H1 (cell line): ENCODE measurements at regions of chr6 and their contacts with region 1.

Region 1: GRCh38 chr6:147397306-147397705 is 111.2 kb upstream of the SAMD5 start:
- DNase-seq: no peak
- H3K4me3 ChIP-seq: no peak overlapping the region
- H3K27ac ChIP-seq: no peak overlapping the region
- H3K4me1 ChIP-seq: no peaks in the 10 kb centered on the region
- H3K27me3 ChIP-seq: no peaks in the 10 kb centered on the region
- CTCF ChIP-seq: no peak
- EP300 ChIP-seq: no peak
- POLR2A ChIP-seq: no peak
- RAD21 ChIP-seq: no peak

Region 2: DNA sequence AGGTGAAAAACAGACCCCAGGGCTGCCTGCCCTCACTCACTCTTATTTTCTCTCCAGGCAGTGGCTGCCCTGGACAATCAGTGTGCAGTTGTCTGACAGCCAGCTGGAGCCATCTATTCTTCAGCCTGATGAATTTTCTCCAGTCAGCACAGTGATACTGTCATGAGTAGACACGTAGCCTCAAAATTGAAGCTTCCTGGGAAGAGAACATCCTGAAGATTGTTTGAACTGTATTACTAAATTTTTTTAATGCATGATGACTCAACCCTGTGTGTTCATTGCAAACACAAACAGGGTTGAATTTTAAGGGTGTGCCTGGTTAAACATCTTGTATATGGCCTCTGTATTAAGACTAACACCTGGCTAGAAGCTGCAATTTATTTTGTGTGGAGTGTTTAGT is 242.9 kb before region 1 on chr6:
- CTCF ChIA-PET with region 1: no interaction called
- POLR2A ChIA-PET with region 1: no interaction called
- DNase-seq: no peak
- H3K4me3 ChIP-seq: no peak overlapping the region
- H3K27ac ChIP-seq: no peak overlapping the region
- H3K4me1 ChIP-seq: no peaks in the 10 kb centered on the region
- H3K27me3 ChIP-seq: no peaks in the 10 kb centered on the region
- CTCF ChIP-seq: no peak
- EP300 ChIP-seq: no peak
- POLR2A ChIP-seq: no peak
- RAD21 ChIP-seq: no peak

Region 3: DNA sequence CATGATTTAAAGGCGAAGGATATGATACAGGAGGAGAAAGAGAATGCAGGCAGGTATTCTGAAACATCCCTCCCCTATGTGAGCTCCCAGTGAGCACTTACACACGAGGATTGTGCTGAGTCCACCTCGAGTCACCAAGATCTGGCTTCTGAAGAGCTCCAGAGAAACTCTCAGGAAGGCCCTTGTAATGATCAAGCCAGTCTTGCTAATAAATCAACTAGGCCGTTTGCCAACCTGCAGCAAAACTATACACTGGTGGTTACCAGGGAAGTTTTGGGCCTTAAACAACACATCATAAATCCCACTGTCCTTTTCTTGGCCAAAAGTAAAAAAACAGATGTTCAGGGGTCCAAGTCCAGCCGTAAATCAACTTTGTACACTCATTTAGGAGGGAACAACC is 113.8 kb before region 1 on chr6:
- CTCF ChIA-PET with region 1: no interaction called
- POLR2A ChIA-PET with region 1: no interaction called
- DNase-seq: no peak
- H3K4me3 ChIP-seq: no peak overlapping the region
- H3K27ac ChIP-seq: no peak overlapping the region
- H3K4me1 ChIP-seq: no peaks in the 10 kb centered on the region
- H3K27me3 ChIP-seq: no peaks in the 10 kb centered on the region
- CTCF ChIP-seq: no peak
- EP300 ChIP-seq: no peak
- POLR2A ChIP-seq: no peak
- RAD21 ChIP-seq: no peak

Region 4: DNA sequence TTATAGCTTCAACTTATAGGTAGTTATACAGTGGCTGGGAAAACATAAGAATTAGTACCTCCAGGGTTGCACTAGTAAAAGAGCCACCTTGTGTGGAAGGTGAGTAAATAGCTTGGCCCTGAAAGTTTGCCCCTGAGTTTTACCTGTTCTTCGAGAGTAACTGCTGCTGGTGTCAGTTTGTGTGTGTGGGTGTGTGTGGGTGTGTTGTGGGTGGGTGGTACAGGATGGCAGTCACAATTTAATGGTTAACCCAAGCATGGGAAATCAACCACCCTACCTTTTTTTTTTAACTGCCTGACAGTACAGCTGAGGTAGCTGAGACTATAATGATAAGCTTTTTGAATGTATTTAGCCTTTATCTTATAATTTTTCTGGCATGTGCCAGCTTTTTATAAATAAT is 55.8 kb before region 1 on chr6:
- CTCF ChIA-PET with region 1: no interaction called
- POLR2A ChIA-PET with region 1: no interaction called
- DNase-seq: no peak
- H3K4me3 ChIP-seq: no peak overlapping the region
- H3K27ac ChIP-seq: no peak overlapping the region
- H3K4me1 ChIP-seq: no peaks in the 10 kb centered on the region
- H3K27me3 ChIP-seq: no peaks in the 10 kb centered on the region
- CTCF ChIP-seq: no peak
- EP300 ChIP-seq: no peak
- POLR2A ChIP-seq: no peak
- RAD21 ChIP-seq: no peak

Region 5: GRCh38 chr6:147382945-147383554 is 14.3 kb before region 1 on chr6:
- CTCF ChIA-PET with region 1: interaction called, 19 read pairs
- POLR2A ChIA-PET with region 1: no interaction called
- DNase-seq: no peak
- H3K4me3 ChIP-seq: no peak overlapping the region
- H3K27ac ChIP-seq: no peak overlapping the region
- H3K4me1 ChIP-seq: no peaks in the 10 kb centered on the region
- H3K27me3 ChIP-seq: no peaks in the 10 kb centered on the region
- CTCF ChIP-seq: peak in 1 of 3 experiments; percentile 27; a peak in 2 of 4 replicates
- EP300 ChIP-seq: no peak
- POLR2A ChIP-seq: no peak
- RAD21 ChIP-seq: peak in 1 of 2 experiments; percentile 25; a peak in 2 of 4 replicates